Heart right ventricle (tissue), 16 donors: ENCODE measurements at regions of chr5 and their contacts with region 1.

Region 1: DNA sequence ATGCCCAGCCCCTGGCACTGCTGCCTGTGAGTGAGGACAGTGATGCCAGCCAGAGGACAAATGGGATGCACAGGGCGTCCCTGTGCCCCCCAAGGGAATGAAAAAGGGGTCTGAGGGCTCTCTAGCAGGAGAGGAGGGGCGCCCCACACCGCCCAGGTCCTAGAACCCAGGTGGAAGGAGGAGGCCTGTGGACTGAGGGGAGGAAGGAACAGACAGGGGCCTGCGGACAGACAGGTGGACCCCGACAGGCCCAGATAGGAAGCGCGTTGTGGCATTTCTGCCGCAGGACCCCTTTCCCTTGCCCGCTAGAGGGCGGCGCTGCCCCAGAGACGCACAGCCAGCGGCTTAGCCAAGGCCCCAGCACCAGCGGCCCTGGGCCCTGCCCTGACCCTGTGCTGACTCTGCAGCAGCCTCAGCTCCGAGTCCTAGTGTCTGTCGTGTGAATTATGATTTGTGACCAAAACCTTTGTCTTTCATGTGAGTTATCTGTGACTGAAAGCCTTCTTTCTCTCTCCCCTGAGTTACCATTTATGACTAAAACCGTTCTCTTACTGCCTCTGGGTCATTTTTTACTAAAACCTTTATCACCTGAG is 30.7 kb downstream of the TRIP13 start:
- DNase-seq: peak; percentile 75 to 88
- ATAC-seq: peak; percentile 84 to 95 (median 91)
- H3K4me3 ChIP-seq: no peak overlapping the region
- H3K27ac ChIP-seq: no peak overlapping the region
- H3K4me1 ChIP-seq: peaks cover 0 to 19% (median 11%) of the 10 kb centered on the region in 9 donors
- H3K27me3 ChIP-seq: peaks cover 0 to 45% (median 29%) of the 10 kb centered on the region in 7 donors
- CTCF ChIP-seq: peak; percentile 65 to 95 (median 87)

Region 2: DNA sequence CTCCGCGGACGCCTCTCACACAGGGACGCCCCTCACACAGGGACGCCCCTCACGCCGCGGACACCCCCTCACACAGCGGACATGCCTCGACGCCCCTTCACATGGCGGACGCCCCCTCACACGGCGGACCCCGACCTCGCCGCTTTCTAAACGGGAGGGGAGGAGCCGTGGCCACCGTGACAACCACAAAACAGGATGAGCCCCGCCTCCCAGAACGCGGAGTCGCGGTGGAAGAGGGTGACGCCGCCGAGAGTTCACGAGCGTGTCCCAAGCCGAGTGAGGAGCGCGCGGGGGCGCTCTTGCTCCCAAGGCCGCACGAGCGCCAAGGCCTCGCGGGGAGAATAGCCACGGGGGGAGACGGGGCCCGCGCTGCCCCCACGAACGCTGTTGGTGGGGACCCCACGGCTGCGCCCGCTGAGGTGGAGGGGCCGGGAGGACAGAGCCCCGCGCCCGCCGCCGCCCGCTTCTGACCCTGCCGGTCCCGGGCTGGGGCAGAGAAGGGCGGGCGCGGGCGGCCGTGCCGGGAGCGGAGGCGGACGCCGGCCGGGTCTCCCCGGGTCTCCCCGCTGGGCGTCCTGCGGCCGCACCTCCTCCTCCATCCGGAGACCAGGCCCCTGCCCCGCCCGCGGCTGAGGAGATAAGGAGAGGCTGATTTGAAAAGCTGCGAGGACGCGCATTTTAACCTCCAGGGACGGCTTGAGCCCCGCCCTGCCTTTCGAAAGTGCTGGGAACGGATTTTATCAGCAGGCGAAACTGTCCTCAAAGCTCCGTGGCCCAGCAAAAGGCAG is 81.3 kb after region 1 on chr5:
- intact Hi-C with region 1: loop called in 1 of 10 experiments (anchors 5 kb)
- DNase-seq: peak; percentile 81 to 87
- ATAC-seq: peak; percentile 70 to 87 (median 81)
- H3K4me3 ChIP-seq: peak overlapping the region; percentile 24 to 64 (median 58)
- H3K27ac ChIP-seq: peak overlapping the region in 9 of 10 donors; percentile 50 to 80 (median 69)
- H3K4me1 ChIP-seq: peaks cover 3 to 36% (median 19%) of the 10 kb centered on the region in 9 donors
- H3K27me3 ChIP-seq: peaks cover 0 to 59% (median 19%) of the 10 kb centered on the region in 7 donors
- CTCF ChIP-seq: peak; percentile 14 to 76 (median 57)

Region 3: GRCh38 chr5:1134478-1134877 is 211.1 kb after region 1 on chr5:
- intact Hi-C with region 1: loop called in 1 of 10 experiments (anchors 10 kb)
- DNase-seq: peak in 1 of 2 donors; percentile 4
- ATAC-seq: no peak
- H3K4me3 ChIP-seq: no peak overlapping the region
- H3K27ac ChIP-seq: peak overlapping the region in 3 of 10 donors; percentile 60 to 70 (median 62)
- H3K4me1 ChIP-seq: peaks cover 9 to 64% (median 30%) of the 10 kb centered on the region in 9 donors
- H3K27me3 ChIP-seq: no peaks in the 10 kb centered on the region
- CTCF ChIP-seq: peak in 4 of 9 donors; percentile 20 to 32 (median 27)

Region 4: DNA sequence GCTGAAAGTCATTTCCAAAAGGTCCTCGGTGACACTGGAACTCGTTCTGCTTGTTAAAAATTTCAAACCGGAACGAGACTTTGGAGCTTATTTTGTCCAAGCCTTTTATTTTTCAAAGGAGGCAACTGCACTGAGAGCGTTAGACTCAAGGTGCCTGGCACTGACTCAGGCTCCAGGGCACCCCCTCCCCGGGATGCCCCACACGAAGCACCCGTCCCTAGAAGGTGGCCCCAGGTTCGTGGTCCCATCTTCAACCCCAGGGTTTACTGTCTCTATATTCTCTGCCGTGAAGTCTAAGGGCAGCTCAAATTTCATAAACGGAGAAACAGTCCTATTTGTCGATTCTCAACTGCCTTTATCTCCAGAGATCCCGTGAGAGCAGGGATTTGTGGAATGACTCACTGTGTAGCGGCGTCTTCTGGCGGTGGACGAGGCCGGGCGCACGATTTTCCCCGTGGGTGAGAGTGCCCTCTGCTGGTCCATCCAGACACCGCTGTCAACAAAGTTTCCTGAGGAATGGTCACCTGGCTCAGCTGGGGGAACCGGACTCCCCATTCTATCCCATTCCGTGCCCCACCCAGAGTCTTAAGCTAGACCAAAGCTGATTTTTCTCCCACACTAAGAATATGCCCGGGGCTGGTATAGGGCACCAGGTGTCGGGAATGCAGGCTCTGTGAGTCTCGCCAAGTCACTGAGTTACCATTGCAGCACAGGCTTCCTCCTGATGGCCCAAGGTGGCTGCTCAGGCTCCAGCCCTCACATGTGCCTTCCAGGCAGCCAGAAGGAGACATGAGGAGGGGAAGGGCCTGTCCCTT is 251.0 kb after region 1 on chr5:
- intact Hi-C with region 1: loop called in 7 of 10 experiments (anchors 1 to 10 kb)
- DNase-seq: peak; percentile 61 to 68
- ATAC-seq: peak; percentile 57 to 83 (median 69)
- H3K4me3 ChIP-seq: no peak overlapping the region
- H3K27ac ChIP-seq: peak overlapping the region in 1 of 10 donors; percentile 31
- H3K4me1 ChIP-seq: peaks cover 0 to 5% (median 0%) of the 10 kb centered on the region in 9 donors
- H3K27me3 ChIP-seq: peaks cover 0 to 5% (median 0%) of the 10 kb centered on the region in 7 donors
- CTCF ChIP-seq: peak; percentile 58 to 85 (median 80)